Activated CD4-positive, alpha-beta memory T cell treated with anti-CD3 and anti-CD28 coated beads, Interleukin-2, amount 10 ng/mL, durations not matched to agents 7 days and 5 days (primary cell): ENCODE measurements at regions of chr7 and their contacts with region 1.

Region 1: DNA sequence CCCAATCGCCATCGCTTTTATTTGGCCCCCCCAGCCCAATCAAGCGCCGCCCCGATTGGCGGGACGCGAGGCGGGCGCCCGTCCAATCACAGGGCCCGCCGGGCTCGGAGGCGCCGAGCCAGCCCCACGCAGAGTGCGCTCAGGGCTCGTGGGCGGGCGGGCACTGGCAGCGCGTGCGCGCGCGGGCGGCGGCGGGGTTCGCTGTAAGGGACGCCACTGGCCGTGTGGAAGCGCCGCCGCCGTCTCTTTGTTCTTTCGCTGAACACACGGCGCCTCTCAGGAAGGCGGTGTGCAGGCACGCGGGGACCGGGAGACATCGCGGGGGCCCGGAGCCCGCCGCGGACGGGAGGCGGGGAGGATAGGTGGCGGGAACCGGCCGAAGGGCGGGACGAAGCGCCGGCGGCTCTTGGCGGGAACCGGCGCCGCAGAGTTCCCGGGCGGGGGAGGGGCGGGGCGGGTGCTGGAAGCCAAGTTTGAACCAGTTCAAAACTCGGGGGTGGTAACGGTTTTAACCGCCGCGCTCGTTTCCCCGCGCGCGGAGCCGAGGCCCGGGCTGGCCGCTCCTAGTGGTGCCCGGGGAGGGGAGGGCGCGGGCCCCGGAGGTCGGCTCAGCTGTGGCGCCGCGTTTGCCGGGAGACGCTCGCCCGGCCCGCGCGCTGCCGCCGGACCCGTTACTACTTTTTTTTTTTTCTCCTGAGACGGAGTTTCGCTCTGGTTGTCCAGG is 370 bp upstream of the EZH2 start:
- DNase-seq: peak; percentile 95
- H3K4me3 Mint-ChIP-seq: peak overlapping the region; percentile 84
- H3K27ac Mint-ChIP-seq: peak overlapping the region; percentile 93
- H3K4me1 Mint-ChIP-seq: peaks cover 29% of the 10 kb centered on the region
- H3K27me3 Mint-ChIP-seq: no peaks in the 10 kb centered on the region

Region 2: GRCh38 chr7:148698397-148699023 is 186.0 kb before region 1 on chr7 and contains the start of gene CUL1:
- CTCF ChIA-PET with region 1: no interaction called
- POLR2A ChIA-PET with region 1: interaction called, 22 read pairs
- DNase-seq: peak; percentile 87
- H3K4me3 Mint-ChIP-seq: peak within 1 kb of the TSS; percentile 87
- H3K27ac Mint-ChIP-seq: peak within 1 kb of the TSS; percentile 77
- H3K4me1 Mint-ChIP-seq: peaks cover 53% of the 10 kb centered on the region
- H3K27me3 Mint-ChIP-seq: peaks cover 2% of the 10 kb centered on the region
- total RNA-seq, gene CUL1: 46.9 to 48.7 TPM

Region 3: DNA sequence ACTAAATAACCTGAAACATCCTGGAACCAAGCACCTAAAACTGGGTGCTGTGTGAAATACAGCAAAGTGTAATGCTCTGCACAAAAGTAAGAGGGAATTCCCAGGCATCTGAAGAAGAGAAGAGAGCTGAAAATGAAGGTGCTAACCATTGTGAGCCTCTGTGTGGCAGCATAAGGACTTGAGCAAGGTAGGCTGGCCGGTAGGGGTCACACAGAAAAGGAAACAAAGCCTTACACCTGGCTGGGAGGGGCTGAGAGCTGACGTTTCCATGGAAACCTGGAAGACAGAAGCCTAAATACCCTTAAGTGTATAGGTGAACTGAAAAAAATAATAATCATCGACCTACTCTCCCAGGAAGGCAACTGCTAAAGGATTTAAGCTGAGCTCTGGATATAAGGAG is 137.2 kb before region 1 on chr7:
- CTCF ChIA-PET with region 1: no interaction called
- POLR2A ChIA-PET with region 1: no interaction called
- DNase-seq: no peak
- H3K4me3 Mint-ChIP-seq: no peak overlapping the region
- H3K27ac Mint-ChIP-seq: no peak overlapping the region
- H3K4me1 Mint-ChIP-seq: peaks cover 7% of the 10 kb centered on the region
- H3K27me3 Mint-ChIP-seq: no peaks in the 10 kb centered on the region

Region 4: DNA sequence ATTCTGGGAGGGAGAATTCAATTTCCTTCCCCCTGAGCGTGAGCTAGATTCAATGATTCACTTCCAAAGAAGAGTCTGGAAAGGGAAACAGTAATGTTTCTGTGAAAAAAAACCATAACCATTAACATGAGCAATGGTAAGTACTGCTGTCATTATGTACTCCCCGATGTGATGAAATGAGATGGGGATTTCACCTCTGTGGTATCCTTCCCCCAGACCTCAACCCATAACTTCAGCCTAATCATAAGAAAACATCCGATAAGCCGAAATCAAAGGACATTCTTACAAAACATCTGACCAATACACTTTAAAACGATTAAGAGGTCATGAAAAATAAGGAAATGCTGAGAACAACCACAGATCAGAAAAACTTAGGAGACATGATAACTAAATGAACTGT is 27.6 kb before region 1 on chr7:
- CTCF ChIA-PET with region 1: interaction called, 7 read pairs
- POLR2A ChIA-PET with region 1: interaction called, 11 read pairs
- DNase-seq: peak; percentile 23
- H3K4me3 Mint-ChIP-seq: no peak overlapping the region
- H3K27ac Mint-ChIP-seq: peak overlapping the region; percentile 56
- H3K4me1 Mint-ChIP-seq: peaks cover 46% of the 10 kb centered on the region
- H3K27me3 Mint-ChIP-seq: no peaks in the 10 kb centered on the region

Region 5: GRCh38 chr7:148872188-148872587 is 12.3 kb before region 1 on chr7:
- CTCF ChIA-PET with region 1: no interaction called
- POLR2A ChIA-PET with region 1: interaction called, 23 read pairs
- DNase-seq: no peak
- H3K4me3 Mint-ChIP-seq: no peak overlapping the region
- H3K27ac Mint-ChIP-seq: no peak overlapping the region
- H3K4me1 Mint-ChIP-seq: peaks cover 53% of the 10 kb centered on the region
- H3K27me3 Mint-ChIP-seq: no peaks in the 10 kb centered on the region

Region 6: GRCh38 chr7:148914208-148914777 is 29.8 kb after region 1 on chr7:
- CTCF ChIA-PET with region 1: no interaction called
- POLR2A ChIA-PET with region 1: interaction called, 34 read pairs
- DNase-seq: peak; percentile 56
- H3K4me3 Mint-ChIP-seq: peak overlapping the region; percentile 31
- H3K27ac Mint-ChIP-seq: peak overlapping the region; percentile 85
- H3K4me1 Mint-ChIP-seq: peaks cover 53% of the 10 kb centered on the region
- H3K27me3 Mint-ChIP-seq: peaks cover 3% of the 10 kb centered on the region

Region 7: DNA sequence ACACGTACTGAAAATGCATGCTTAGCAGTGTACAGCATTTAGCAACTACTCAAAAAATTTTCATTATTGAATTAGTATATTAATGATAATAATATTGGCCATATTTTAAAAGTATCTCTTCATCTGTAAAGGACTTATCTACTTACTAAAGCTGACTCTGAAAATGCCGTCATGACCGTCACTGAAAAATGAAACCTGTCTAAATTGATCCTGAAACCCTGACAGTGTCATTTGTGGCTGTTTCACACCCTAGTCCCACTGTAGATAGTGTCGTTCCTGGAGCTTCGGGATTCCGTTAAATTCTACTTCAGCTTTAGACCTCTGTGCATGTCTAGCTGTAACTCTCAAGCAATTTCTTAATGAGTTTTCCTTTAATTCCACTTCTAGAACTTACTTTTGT is 35.4 kb after region 1 on chr7:
- CTCF ChIA-PET with region 1: no interaction called
- POLR2A ChIA-PET with region 1: interaction called, 34 read pairs
- DNase-seq: no peak
- H3K4me3 Mint-ChIP-seq: peak overlapping the region; percentile 12
- H3K27ac Mint-ChIP-seq: no peak overlapping the region
- H3K4me1 Mint-ChIP-seq: peaks cover 38% of the 10 kb centered on the region
- H3K27me3 Mint-ChIP-seq: no peaks in the 10 kb centered on the region

Region 8: GRCh38 chr7:148987010-148987750 is 102.7 kb after region 1 on chr7:
- CTCF ChIA-PET with region 1: interaction called, 5 read pairs
- POLR2A ChIA-PET with region 1: interaction called, 10 read pairs
- DNase-seq: peak; percentile 86
- H3K4me3 Mint-ChIP-seq: peak overlapping the region; percentile 95
- H3K27ac Mint-ChIP-seq: peak overlapping the region; percentile 86
- H3K4me1 Mint-ChIP-seq: peaks cover 48% of the 10 kb centered on the region
- H3K27me3 Mint-ChIP-seq: peaks cover 31% of the 10 kb centered on the region

Region 9: GRCh38 chr7:149680331-149681025 is 796.0 kb after region 1 on chr7:
- CTCF ChIA-PET with region 1: no interaction called
- POLR2A ChIA-PET with region 1: no interaction called
- DNase-seq: no peak
- H3K4me3 Mint-ChIP-seq: no peak overlapping the region
- H3K27ac Mint-ChIP-seq: no peak overlapping the region
- H3K4me1 Mint-ChIP-seq: no peaks in the 10 kb centered on the region
- H3K27me3 Mint-ChIP-seq: peaks cover 40% of the 10 kb centered on the region